ENCODE measurements at regions of chr21 and their contacts with region 1.

Region 1: GRCh38 chr21:35095859-35096291 is 46.8 kb upstream of the RUNX1 start:
- DNase-seq: no peak
- H3K4me3 Mint-ChIP-seq: no peak overlapping the region
- H3K27ac Mint-ChIP-seq: no peak overlapping the region
- H3K4me1 Mint-ChIP-seq: peaks cover 32% of the 10 kb centered on the region
- H3K27me3 Mint-ChIP-seq: no peaks in the 10 kb centered on the region

Region 2: GRCh38 chr21:35127851-35128250 is 32.0 kb after region 1 on chr21:
- CTCF ChIA-PET with region 1: interaction called, 3 read pairs
- intact Hi-C with region 1: loop called (anchors 1 kb)
- DNase-seq: no peak
- H3K4me3 Mint-ChIP-seq: no peak overlapping the region
- H3K27ac Mint-ChIP-seq: no peak overlapping the region
- H3K4me1 Mint-ChIP-seq: no peaks in the 10 kb centered on the region
- H3K27me3 Mint-ChIP-seq: no peaks in the 10 kb centered on the region

Region 3: DNA sequence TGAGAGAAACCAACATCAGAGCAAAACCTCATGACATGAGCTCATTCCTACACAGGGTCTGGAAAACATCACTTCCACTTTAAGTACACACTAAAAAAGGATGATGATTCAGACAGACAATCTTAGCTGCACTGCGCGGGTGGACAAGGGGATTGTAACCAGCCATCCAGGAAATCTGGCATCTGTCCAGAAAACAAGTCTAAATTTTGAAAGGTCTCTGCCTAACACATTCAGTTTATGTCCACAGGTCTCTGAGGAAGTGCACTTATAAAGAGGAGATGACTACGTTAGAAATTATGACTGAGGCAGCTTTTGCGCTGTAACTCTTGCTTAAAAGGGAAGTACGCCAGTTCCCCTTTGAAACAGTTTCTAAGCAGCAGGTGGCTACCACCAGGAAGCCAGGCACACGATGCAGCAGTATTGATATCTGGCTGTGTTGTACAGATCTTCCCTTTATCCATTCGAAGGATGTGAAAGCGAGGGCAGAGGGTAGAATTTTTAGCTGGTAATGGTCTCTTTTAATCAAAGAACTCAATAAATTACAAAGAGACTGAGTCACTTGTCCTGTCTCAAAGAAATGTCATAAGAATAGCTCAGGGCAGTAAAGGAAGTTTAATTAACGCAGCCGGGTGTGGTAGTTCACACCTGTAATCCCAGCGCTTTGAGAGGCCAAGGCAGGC is 836.5 kb after region 1 on chr21:
- CTCF ChIA-PET with region 1: no interaction called
- intact Hi-C with region 1: loop called (anchors 1 kb)
- DNase-seq: peak; percentile 60
- H3K4me3 Mint-ChIP-seq: no peak overlapping the region
- H3K27ac Mint-ChIP-seq: no peak overlapping the region
- H3K4me1 Mint-ChIP-seq: no peaks in the 10 kb centered on the region
- H3K27me3 Mint-ChIP-seq: no peaks in the 10 kb centered on the region

Measured in activated naive CD4-positive, alpha-beta T cell treated with anti-CD3 and anti-CD28 coated beads for 36 hours (primary cell).